ENCODE measurements at regions of chr22 and their contacts with region 1.

Region 1: GRCh38 chr22:18077639-18078328 is at the start of gene PEX26:
- DNase-seq: peak; percentile 97
- H3K4me3 ChIP-seq: peak within 1 kb of the TSS; percentile 87
- H3K27ac ChIP-seq: peak within 1 kb of the TSS; percentile 76
- H3K4me1 ChIP-seq: peaks cover 56% of the 10 kb centered on the region
- CTCF ChIP-seq: no peak
- total RNA-seq, gene PEX26: 17.6 and 22.4 TPM in 2 replicates

Region 2: DNA sequence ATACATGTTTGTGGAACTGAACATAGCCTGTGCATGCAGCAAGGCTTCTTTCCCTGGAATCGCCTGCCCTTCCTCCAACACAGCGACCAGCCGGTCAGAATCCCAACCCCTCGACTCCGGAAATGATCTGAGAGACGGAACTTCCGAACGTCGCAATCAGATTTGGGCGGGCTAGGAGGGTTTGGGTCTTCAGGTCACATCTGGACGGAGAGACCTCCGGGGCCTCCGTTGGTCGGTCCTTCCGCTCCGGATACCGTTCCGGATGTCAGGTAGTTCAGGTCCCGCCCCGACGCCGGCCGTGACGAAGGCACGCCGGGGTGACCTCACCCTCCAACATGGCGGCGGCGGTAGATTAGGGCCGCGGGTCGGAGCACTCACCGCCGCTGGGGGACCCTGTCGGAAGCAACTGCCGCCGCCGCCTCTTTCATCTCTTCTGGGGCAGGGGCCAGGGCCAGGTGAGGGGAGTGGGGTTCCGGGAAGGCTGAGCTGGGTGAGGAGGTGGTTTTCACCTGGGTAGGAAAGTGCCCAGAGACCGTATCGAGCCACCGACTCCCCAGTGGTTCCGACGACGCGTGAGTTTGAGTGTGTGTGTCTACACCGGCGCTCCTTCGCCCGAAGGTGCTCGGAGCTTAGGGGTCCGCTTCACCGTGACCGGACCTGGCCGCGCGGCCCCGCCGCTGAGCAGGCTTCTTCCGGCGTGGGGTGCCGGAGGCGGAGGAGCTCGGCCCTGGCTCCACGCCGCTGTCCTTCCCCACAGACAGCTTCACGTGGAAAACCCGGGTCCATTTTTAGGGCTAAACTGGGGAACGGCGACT is 439.1 kb before region 1 on chr22 and contains the start of gene BCL2L13:
- CTCF ChIA-PET with region 1: no interaction called
- POLR2A ChIA-PET with region 1: no interaction called
- intact Hi-C with region 1: loop called (anchors 5 kb)
- DNase-seq: peak; percentile 95
- H3K4me3 ChIP-seq: peak within 1 kb of the TSS; percentile 81
- H3K27ac ChIP-seq: peak within 1 kb of the TSS; percentile 81
- H3K4me1 ChIP-seq: peaks cover 19% of the 10 kb centered on the region
- CTCF ChIP-seq: no peak
- total RNA-seq, gene BCL2L13: 21.7 and 25.2 TPM in 2 replicates

Region 3: DNA sequence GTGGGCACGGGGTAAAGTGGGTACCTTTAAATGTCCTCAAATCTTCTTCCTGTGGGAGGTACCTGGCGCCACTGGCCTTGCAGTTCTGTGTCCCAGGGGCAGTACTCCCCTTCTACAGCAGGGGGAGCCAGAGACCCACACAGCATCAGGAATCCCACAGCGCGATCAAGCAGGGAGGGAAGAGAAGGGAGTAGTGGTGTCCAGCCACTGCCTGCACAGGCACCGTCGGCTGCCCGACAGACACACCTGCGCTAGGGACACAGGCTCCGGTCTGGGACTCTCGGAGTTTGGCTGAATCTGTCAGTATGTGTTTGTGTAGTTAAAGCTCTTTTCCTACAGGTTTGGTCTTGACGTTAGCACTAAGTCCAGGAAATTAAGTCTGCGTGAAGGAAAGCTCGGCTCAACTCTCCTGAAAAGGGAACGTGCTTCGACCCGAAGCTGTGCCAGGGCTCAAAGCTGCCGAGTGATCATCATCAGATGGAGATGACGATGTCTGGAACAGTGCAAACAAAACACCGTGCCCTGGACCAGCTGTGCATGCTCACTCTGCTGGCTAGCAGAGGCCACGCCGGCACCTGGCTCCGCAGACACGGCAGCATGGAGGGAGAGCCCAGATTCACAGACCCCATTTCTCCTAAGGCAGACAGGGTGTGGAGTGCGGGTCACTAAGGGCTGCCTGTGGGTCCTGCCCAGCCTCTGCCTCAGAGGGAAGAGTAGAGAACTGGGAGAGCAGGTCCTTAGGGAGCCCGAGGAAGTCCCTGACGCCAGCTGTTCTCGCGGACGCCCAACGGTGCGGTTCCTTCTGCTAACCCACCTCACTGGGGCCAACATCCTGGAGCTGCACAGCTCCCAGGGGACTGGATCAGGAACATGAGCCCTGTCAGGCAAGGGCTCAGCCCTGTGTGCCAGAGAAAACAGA is 247.5 kb before region 1 on chr22:
- CTCF ChIA-PET with region 1: interaction called, 7 read pairs
- POLR2A ChIA-PET with region 1: interaction called, 7 read pairs
- intact Hi-C with region 1: loop called (anchors 1 kb)
- DNase-seq: peak; percentile 80
- H3K4me3 ChIP-seq: no peak overlapping the region
- H3K27ac ChIP-seq: no peak overlapping the region
- H3K4me1 ChIP-seq: no peaks in the 10 kb centered on the region
- CTCF ChIP-seq: peak; percentile 94

Region 4: DNA sequence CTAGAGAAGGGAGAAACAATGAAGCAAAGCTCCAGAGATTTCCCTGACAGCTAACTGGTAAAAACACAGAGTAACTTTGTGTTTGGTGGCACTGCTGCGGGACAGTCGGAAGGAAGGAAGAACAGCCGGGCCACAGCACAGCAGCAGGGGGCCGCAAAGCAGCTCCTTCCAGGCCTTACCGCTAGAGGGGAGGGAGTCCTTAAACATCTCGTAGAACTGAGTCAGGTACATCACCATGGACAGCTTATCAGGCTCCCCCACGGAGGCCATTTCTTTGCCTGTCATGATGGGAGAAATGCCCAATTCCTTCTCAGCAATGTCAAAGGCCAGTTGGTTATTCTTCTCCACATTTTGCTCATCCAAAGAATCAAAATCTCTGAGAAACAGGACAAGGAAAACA is 188.9 kb before region 1 on chr22:
- CTCF ChIA-PET with region 1: interaction called, 4 read pairs
- POLR2A ChIA-PET with region 1: interaction called, 4 read pairs
- intact Hi-C with region 1: loop called (anchors 2 kb)
- DNase-seq: peak; percentile 48
- H3K4me3 ChIP-seq: no peak overlapping the region
- H3K27ac ChIP-seq: no peak overlapping the region
- H3K4me1 ChIP-seq: no peaks in the 10 kb centered on the region
- CTCF ChIP-seq: peak; percentile 63

Region 5: DNA sequence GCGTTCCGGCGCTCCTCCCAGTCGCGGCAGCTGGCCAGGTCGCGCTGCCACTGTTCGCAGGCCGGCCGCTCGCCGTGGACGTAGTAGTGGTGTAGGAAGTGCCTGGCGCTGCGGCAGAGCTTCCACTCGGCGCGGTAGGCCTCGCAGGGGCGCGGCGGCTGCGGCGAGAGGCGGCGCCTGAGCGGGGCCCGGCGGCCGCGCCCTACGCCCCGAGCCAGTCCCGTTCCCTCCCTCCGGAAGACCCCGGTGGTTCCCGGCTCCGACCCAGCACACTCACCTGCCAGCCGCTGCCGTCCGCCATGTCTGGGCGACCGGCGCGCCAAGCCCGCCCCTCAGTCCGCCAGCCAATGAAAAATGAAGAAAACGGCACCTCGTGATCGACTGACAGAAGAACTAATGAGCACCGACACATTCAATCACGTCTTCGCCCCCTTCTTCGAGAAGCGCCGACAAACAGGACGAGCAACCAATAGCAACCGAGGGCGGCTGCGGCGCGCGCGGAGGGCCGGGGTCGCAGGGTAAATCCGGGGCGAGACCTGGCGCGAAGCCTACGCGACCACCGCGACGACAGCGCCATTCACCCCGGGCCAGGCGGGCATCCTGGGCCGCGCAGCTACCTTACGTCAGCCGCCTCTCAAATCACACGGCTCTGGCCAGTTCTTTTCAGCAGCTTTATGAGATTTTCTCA is 1369.7 kb after region 1 on chr22 and contains the start of gene C22orf39:
- CTCF ChIA-PET with region 1: no interaction called
- POLR2A ChIA-PET with region 1: no interaction called
- intact Hi-C with region 1: loop called (anchors 5 kb)
- DNase-seq: peak; percentile 95
- H3K4me3 ChIP-seq: peak within 1 kb of the TSS; percentile 91
- H3K27ac ChIP-seq: peak within 1 kb of the TSS; percentile 71
- H3K4me1 ChIP-seq: peaks cover 27% of the 10 kb centered on the region
- CTCF ChIP-seq: no peak
- total RNA-seq, gene C22orf39: 64.8 and 70.4 TPM in 2 replicates

Measured in OCI-LY7 (cell line).